Cardiac septum (tissue), 1 donor: ENCODE measurements at regions of chr5 and their contacts with region 1.

Region 1: DNA sequence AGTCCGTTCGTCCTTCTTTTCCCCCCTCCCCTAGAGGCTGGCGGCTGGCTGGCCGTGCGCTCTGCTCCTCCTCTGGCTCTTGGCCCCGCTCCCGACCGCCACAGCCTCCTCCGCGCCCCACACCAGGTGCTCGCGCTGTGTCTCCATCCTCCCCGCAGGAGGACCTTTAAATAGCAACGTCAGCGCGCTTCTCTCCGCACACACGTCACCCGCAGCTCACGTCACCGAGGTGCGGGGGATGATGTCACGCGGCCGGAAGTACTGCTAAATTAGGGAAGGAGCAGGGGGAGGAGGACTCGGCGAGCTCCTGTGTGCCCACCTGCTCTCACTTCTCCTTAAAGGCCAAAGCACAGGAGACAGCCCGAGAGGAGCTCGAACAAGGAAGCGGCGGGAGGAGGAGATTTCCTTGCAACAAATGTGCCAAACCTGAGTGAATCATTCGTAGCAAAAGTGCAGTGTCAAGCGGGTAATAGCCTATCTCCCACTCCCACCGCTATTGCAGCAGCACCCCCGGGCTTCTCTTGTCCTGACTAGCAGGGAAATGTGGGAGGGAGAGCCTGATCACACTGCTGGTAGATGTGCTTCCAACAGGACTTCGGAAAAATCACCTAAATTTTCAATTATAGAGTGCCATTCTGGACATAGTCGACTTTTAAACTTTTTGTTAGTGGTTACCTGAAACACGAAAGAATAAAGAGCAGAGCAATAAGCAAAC is 614 bp upstream of the HOMER1 start:
- DNase-seq: peak; percentile 93

Region 2: DNA sequence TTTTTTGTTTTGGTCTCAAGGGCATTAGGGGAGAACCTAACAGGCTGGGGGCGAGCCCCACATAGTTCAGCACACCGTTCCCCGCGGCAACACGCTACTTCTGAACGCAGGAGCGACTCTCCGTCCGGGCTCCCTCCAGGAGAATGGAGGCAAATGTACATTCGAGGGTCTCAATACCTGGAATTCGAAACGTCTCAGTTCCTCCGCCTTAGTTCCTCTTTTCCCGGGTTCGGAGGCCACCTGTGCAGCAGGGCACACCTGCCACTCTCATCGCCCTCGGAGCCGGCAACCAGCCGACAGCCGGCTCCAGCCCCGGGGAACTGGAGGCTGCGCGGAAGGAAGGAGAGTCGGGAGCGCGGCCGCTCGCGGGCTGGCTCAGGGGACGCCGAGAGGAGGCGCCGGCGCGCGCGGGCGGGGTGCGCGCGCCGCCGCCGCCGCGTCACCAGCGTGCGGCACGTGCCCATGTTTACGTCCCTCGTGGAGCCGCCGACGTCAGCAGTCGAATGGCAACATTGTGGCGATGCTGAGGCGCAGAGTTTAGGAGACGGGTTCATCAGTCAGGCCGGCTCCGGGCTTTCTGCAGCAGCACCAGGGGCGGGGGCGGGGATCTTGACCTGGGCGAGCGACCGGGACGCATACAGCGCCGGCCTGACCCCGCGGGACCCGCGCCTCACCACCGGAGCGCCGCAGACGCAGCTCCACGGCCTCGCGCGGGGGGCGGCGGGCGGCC is 278.7 kb before region 1 on chr5 and contains the start of gene JMY:
- intact Hi-C with region 1: loop called (anchors 5 kb)
- DNase-seq: peak; percentile 94
- total RNA-seq, gene JMY: 10.3 TPM

Region 3: GRCh38 chr5:79464695-79465332 is 49.7 kb before region 1 on chr5:
- intact Hi-C with region 1: no loop called
- DNase-seq: no peak

Region 4: GRCh38 chr5:79602889-79603288 is 88.3 kb after region 1 on chr5:
- intact Hi-C with region 1: no loop called
- DNase-seq: no peak

Region 5: DNA sequence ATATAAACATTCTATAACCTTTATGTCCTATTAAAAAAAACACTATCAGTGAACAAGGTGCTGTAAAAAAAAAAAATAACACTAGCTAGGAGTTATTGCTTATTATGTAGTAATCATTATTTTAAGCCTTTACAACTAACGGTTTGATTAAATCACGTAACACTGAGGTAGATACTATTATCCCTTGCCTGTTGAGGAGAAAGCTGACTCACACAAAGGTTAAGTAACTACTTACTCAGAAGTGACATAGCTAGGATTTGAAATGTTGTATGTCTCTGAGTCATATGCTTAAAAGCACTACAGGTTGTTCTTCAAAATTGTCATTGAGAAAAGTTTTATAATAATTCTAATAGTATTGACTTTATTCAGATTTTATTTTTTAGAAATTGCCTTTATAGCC is 106.5 kb after region 1 on chr5:
- intact Hi-C with region 1: no loop called
- DNase-seq: no peak